Endothelial cell of umbilical vein (primary cell): ENCODE measurements at regions of chr21 and their contacts with region 1.

Region 1: GRCh38 chr21:29298348-29299045 is at the start of gene BACH1:
- DNase-seq: peak; percentile 89
- H3K4me3 ChIP-seq: peak within 1 kb of the TSS; percentile 52 to 90 (median 75)
- H3K27ac ChIP-seq: peak within 1 kb of the TSS; percentile 62
- H3K4me1 ChIP-seq: peaks cover 17% of the 10 kb centered on the region
- H3K27me3 ChIP-seq: no peaks in the 10 kb centered on the region
- CTCF ChIP-seq: peak; percentile 19 to 48
- POLR2A ChIP-seq: peak; percentile 89
- total RNA-seq, gene BACH1: 28.8 and 30.3 TPM in 2 replicates

Region 2: DNA sequence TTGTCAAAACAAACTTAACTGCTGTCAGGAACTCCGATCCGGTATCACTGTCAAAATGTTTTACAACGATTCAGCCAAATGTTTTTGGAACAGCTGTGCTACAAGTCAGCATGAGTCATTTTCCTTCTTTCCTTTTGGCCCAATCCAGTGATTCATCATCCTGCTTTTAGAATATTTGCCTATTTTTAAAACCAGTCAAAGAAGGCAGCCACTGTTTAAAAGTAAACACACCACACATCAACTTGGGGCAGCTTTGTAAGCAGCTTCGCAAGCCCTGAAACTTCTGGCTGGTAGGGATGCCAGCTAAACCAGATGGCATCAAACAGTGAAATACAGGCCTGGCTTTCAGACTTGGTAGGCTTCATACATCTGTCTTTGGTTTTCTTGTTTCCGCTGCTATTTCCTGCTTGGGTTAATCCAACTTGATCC is 153.1 kb before region 1 on chr21:
- CTCF ChIA-PET with region 1: interaction called, 3 read pairs
- POLR2A ChIA-PET with region 1: interaction called, 9 read pairs
- dilution Hi-C with region 1: no loop called
- intact Hi-C with region 1: loop called (anchors 1 kb)
- DNase-seq: peak; percentile 96
- H3K4me3 ChIP-seq: peak overlapping the region in 1 of 3 experiments; percentile 41
- H3K27ac ChIP-seq: peak overlapping the region; percentile 97
- H3K4me1 ChIP-seq: peaks cover 35% of the 10 kb centered on the region
- H3K27me3 ChIP-seq: no peaks in the 10 kb centered on the region
- CTCF ChIP-seq: no peak
- POLR2A ChIP-seq: no peak

Region 3: GRCh38 chr21:29181799-29182470 is 116.6 kb before region 1 on chr21:
- CTCF ChIA-PET with region 1: interaction called, 5 read pairs
- POLR2A ChIA-PET with region 1: interaction called, 8 read pairs
- dilution Hi-C with region 1: no loop called
- intact Hi-C with region 1: loop called (anchors 1 kb)
- DNase-seq: peak; percentile 90
- H3K4me3 ChIP-seq: peak overlapping the region; percentile 11 to 73 (median 32)
- H3K27ac ChIP-seq: peak overlapping the region; percentile 99
- H3K4me1 ChIP-seq: peaks cover 31% of the 10 kb centered on the region
- H3K27me3 ChIP-seq: no peaks in the 10 kb centered on the region
- CTCF ChIP-seq: no peak
- POLR2A ChIP-seq: peak; percentile 40

Region 4: DNA sequence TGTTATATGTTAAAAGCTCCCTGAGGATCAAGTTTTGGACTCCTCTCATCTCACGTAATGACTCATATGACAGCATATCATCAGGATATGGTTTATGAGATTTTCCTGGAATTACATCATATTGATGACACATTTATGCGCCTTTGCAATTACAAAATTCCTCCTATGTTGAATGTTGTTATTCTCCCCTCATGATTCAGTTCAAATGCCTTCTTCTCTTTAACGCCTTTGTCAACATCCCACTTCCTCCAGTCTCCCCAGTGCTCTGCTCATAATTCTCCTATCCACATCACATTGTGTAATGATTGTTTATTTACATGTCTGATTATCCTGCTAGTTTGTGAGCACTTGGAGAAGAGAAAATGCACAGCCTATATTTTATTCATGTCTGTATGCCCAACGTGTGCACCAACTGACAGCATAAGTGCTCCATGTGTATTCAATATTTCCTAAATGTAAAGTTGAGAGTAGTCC is 80.6 kb before region 1 on chr21:
- CTCF ChIA-PET with region 1: no interaction called
- POLR2A ChIA-PET with region 1: no interaction called
- dilution Hi-C with region 1: no loop called
- intact Hi-C with region 1: loop called (anchors 1 kb)
- DNase-seq: peak; percentile 97
- H3K4me3 ChIP-seq: no peak overlapping the region
- H3K27ac ChIP-seq: peak overlapping the region; percentile 81
- H3K4me1 ChIP-seq: peaks cover 23% of the 10 kb centered on the region
- H3K27me3 ChIP-seq: no peaks in the 10 kb centered on the region
- CTCF ChIP-seq: no peak
- POLR2A ChIP-seq: peak; percentile 45

Region 5: GRCh38 chr21:29342363-29342957 is 44.0 kb after region 1 on chr21:
- CTCF ChIA-PET with region 1: interaction called, 9 read pairs
- POLR2A ChIA-PET with region 1: interaction called, 5 read pairs
- dilution Hi-C with region 1: no loop called
- intact Hi-C with region 1: loop called (anchors 1 kb)
- DNase-seq: peak; percentile 91
- H3K4me3 ChIP-seq: no peak overlapping the region
- H3K27ac ChIP-seq: peak overlapping the region; percentile 82
- H3K4me1 ChIP-seq: peaks cover 29% of the 10 kb centered on the region
- H3K27me3 ChIP-seq: no peaks in the 10 kb centered on the region
- CTCF ChIP-seq: no peak
- POLR2A ChIP-seq: peak; percentile 33